PC-9 (cell line): ENCODE measurements at regions of chr1 and their contacts with region 1.

Region 1: GRCh38 chr1:44507490-44508396 is 102.7 kb downstream of the RNF220 start:
- DNase-seq: no peak
- H3K4me3 ChIP-seq: no peak overlapping the region
- H3K27ac ChIP-seq: no peak overlapping the region
- H3K4me1 ChIP-seq: no peaks in the 10 kb centered on the region
- H3K27me3 ChIP-seq: no peaks in the 10 kb centered on the region
- CTCF ChIP-seq: no peak

Region 2: DNA sequence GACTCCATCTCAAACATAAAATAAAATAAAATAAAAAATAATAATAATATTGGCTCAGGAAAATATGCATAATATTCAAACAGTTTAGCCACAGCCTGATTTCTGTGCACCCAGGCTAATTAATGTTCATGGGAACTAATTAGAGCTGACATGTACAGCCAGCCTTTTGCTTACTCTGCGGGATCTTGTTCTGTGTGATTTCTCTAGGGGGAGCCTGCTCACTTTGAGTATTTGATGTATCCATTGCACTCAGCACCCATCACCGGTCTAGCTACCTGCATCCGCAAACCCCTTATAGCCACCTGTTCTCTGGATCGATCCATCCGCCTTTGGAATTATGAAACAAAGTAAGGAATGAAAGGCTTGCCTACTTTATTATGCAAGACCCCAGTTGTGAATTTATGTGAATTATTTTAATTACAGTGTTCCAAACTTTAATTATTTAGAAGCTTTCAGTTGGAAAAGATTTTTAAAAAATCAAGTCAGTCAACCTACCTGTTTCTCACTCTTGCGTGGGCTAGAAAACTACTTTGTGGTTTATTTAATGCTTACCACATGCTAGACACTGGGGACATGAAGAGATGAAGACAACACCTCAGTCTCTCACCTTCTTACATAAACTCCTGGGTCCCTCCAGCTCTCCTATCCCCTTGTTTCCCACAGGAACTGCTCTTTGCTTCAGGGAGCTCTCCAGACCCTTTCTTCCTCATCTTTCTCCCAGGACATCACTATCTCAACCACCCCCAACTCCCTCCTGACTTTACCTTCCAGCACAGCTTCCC is 1310.2 kb before region 1 on chr1:
- CTCF ChIA-PET with region 1: interaction called, 16 read pairs
- POLR2A ChIA-PET with region 1: no interaction called
- intact Hi-C with region 1: no loop called
- DNase-seq: no peak
- H3K4me3 ChIP-seq: no peak overlapping the region
- H3K27ac ChIP-seq: no peak overlapping the region
- H3K4me1 ChIP-seq: no peaks in the 10 kb centered on the region
- H3K27me3 ChIP-seq: no peaks in the 10 kb centered on the region
- CTCF ChIP-seq: no peak